Breast epithelium (tissue), 4 donors: ENCODE measurements at regions of chr16 and their contacts with region 1.

Region 1: DNA sequence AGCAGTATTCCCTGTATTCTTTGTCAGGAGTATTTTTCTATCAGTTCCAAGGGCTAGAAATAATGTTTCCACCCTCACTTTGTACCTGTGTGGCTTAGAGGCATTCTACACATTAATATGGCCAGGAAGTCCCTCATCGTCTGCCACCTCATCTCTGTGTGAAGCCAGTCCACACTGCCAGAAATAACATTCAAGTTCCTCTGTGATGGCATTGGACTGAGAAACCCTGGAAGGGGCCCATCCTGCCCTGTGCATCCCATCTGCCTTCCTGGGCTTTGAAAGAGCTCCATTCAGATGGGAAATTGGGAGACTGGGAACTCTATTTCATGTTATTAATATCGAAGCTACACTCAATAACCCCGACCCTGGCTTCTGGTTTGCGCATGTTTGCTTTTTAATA is 497.2 kb upstream of the CDH5 start:
- DNase-seq: no peak
- H3K4me3 ChIP-seq: no peak overlapping the region
- H3K27ac ChIP-seq: no peak overlapping the region
- H3K4me1 ChIP-seq: no peaks in the 10 kb centered on the region
- H3K27me3 ChIP-seq: no peaks in the 10 kb centered on the region
- CTCF ChIP-seq: no peak
- POLR2A ChIP-seq: no peak

Region 2: DNA sequence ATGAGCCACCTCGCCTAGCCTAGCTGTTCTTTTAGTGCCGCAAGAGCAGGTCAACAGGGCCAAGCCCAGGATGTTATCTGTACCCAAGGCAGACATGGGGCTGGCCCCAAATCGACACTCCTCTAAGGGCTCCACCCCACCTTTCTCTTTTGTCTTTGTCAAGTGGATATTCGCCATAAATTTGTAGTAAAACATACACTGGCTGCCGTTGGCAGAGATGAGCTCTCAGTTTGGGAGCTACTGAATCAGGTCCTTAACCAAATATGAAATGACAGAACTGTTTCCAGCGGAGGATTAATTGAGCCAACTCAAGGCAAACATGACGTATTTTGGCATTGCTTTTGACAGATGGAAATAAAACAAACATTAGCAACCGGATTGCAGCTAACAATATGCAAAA is 59.6 kb before region 1 on chr16:
- intact Hi-C with region 1: loop called (anchors 2 kb)
- DNase-seq: no peak
- H3K4me3 ChIP-seq: no peak overlapping the region
- H3K27ac ChIP-seq: no peak overlapping the region
- H3K4me1 ChIP-seq: no peaks in the 10 kb centered on the region
- H3K27me3 ChIP-seq: no peaks in the 10 kb centered on the region
- CTCF ChIP-seq: no peak
- POLR2A ChIP-seq: no peak